CD4-positive, alpha-beta T cell (primary cell): ENCODE measurements at regions of chr9 and their contacts with region 1.

Region 1: GRCh38 chr9:22037954-22038690 is 29.0 kb upstream of the CDKN2B start:
- DNase-seq: peak in 3 of 14 experiments; percentile 48 to 54 (median 51)
- ATAC-seq: peak; percentile 49
- H3K4me3 ChIP-seq: no peak overlapping the region
- H3K4me3 Mint-ChIP-seq: no peak overlapping the region
- H3K27ac ChIP-seq: no peak overlapping the region
- H3K27ac Mint-ChIP-seq: no peak overlapping the region
- H3K4me1 ChIP-seq: no peaks in the 10 kb centered on the region
- H3K4me1 Mint-ChIP-seq: no peaks in the 10 kb centered on the region
- H3K27me3 ChIP-seq: no peaks in the 10 kb centered on the region
- H3K27me3 Mint-ChIP-seq: no peaks in the 10 kb centered on the region
- CTCF ChIP-seq: peak; percentile 72

Region 2: GRCh38 chr9:21465859-21466518 is 572.1 kb before region 1 on chr9:
- CTCF ChIA-PET with region 1: no interaction called
- POLR2A ChIA-PET with region 1: no interaction called
- intact Hi-C with region 1: loop called in 1 of 2 experiments (anchors 10 kb)
- DNase-seq: peak in 3 of 14 experiments; percentile 70 to 75 (median 74)
- ATAC-seq: peak; percentile 82
- H3K4me3 ChIP-seq: no peak overlapping the region
- H3K4me3 Mint-ChIP-seq: no peak overlapping the region
- H3K27ac ChIP-seq: no peak overlapping the region
- H3K27ac Mint-ChIP-seq: no peak overlapping the region
- H3K4me1 ChIP-seq: no peaks in the 10 kb centered on the region
- H3K4me1 Mint-ChIP-seq: no peaks in the 10 kb centered on the region
- H3K27me3 ChIP-seq: no peaks in the 10 kb centered on the region
- H3K27me3 Mint-ChIP-seq: peaks cover 15% of the 10 kb centered on the region
- CTCF ChIP-seq: peak; percentile 78

Region 3: DNA sequence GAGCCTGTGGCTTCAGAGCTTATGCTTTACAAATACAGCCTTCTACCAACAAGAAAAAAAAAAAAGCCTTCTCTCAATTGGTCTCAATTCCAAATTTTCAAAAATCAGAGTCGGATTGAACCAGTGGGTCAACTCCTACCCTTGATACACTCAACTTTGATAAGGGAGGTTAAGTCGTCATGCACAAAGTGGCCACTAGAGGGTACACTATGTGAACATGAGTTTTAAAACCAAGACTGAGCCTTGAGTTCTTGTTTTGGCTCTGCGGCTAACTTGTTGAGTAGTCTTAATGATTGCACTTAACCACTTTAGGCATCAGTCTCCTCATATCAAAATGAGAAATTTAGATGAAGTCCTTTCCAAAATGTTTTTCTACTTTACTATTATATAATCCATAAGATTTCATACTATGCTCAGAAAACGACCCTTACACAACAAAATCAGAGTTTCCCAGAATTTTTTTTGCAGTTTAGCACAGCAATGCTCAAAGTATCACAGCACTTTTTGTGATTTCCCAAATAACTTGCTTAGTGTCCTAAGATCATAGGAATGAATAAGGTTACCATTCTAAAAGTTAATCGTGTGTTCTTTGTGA is 328.6 kb before region 1 on chr9:
- CTCF ChIA-PET with region 1: no interaction called
- POLR2A ChIA-PET with region 1: no interaction called
- intact Hi-C with region 1: loop called in 1 of 2 experiments (anchors 10 kb)
- DNase-seq: peak; percentile 15 to 77 (median 52)
- ATAC-seq: peak; percentile 72
- H3K4me3 ChIP-seq: no peak overlapping the region
- H3K4me3 Mint-ChIP-seq: no peak overlapping the region
- H3K27ac ChIP-seq: no peak overlapping the region
- H3K27ac Mint-ChIP-seq: no peak overlapping the region
- H3K4me1 ChIP-seq: peaks cover 4% of the 10 kb centered on the region
- H3K4me1 Mint-ChIP-seq: peaks cover 26% of the 10 kb centered on the region
- H3K27me3 ChIP-seq: no peaks in the 10 kb centered on the region
- H3K27me3 Mint-ChIP-seq: no peaks in the 10 kb centered on the region
- CTCF ChIP-seq: peak; percentile 95

Region 4: DNA sequence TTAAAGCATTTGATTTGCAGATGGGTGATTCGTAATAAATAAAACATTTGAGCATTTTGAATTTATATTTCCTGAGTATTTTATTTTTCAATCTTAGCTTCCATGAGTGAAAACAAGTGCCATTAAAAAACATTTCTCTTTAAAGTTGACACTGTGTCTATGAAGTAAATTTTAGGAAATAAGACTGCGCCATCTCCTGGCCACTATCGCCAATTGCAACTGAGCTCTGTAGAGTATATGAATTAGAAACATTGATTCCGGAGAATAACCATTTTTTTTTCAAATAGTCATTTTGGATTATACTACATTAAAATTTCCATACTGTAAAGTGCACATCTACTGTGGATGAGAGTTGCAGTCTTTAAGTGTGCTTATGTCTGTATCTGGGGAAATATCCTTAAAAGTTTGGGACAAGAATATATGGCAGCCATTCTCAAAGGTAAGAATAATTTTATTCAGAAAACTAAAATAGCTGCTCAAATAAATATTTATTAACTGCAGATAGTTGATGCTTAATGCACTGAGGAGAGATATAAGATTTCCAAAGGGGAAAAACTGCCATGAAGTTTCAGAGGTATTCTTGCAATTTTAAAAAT is 414.4 kb after region 1 on chr9:
- CTCF ChIA-PET with region 1: no interaction called
- POLR2A ChIA-PET with region 1: no interaction called
- intact Hi-C with region 1: loop called in 1 of 2 experiments (anchors 10 kb)
- DNase-seq: peak in 13 of 14 experiments; percentile 10 to 62 (median 20)
- ATAC-seq: peak; percentile 44
- H3K4me3 ChIP-seq: no peak overlapping the region
- H3K4me3 Mint-ChIP-seq: no peak overlapping the region
- H3K27ac ChIP-seq: no peak overlapping the region
- H3K27ac Mint-ChIP-seq: no peak overlapping the region
- H3K4me1 ChIP-seq: peaks cover 3% of the 10 kb centered on the region
- H3K4me1 Mint-ChIP-seq: no peaks in the 10 kb centered on the region
- H3K27me3 ChIP-seq: peaks cover 7 to 31% of the 10 kb centered on the region in 2 experiments
- H3K27me3 Mint-ChIP-seq: peaks cover 56% of the 10 kb centered on the region
- CTCF ChIP-seq: peak; percentile 80